Aorta (tissue), 5 donors: ENCODE measurements at regions of chr5 and their contacts with region 1.

Region 1: DNA sequence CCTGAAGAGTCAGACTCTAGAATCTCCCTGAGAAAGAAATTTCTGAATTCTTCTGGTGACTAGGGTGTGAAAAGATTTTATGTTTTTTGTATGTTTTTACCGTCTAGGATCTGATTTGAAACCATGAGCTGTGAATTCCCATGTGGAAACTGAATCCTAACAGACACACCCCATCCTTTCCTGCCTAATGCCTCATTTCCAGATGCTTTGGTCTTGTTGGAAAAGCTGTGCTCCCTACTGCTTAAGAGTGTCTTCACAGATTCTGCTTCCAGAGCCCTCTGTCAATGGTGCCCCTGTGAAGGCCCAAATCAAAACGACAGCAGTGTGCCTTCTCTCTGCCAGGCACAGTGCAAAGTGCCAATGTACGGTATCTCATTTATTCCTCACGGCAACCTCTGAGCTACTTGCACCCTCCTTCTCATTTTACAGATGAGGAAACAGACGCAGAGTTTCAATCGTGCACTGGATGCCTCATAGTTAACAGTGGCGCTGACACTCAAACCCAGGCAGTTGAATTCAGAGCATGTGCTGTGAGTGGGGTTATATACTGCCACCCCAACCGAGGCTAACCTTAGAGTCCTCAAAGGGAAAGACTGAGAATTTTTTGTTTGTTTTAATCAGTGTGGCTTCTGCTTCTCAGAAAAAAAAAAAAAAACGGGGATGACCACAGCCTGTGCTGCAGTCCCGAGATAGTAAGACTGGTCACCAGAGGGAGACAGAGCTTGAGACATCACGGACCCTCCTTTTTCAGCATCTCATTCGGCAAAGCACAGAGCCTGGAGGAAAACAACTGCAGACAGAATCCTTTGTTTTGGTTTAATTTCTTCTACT is 188.4 kb downstream of the SNCAIP start:
- DNase-seq: no peak
- ATAC-seq: peak; percentile 87
- H3K4me3 ChIP-seq: peak overlapping the region; percentile 13 to 36
- H3K27ac ChIP-seq: peak overlapping the region; percentile 53 to 72
- H3K4me1 ChIP-seq: peaks cover 0 to 4% of the 10 kb centered on the region in 2 donors
- H3K27me3 ChIP-seq: no peaks in the 10 kb centered on the region

Region 2: GRCh38 chr5:122435761-122436160 is 64.7 kb before region 1 on chr5:
- intact Hi-C with region 1: loop called in 1 of 2 experiments (anchors 5 kb)
- DNase-seq: no peak
- ATAC-seq: no peak
- H3K4me3 ChIP-seq: no peak overlapping the region
- H3K27ac ChIP-seq: no peak overlapping the region
- H3K4me1 ChIP-seq: peaks cover 3 to 12% of the 10 kb centered on the region in 2 donors
- H3K27me3 ChIP-seq: no peaks in the 10 kb centered on the region

Region 3: GRCh38 chr5:122545986-122546385 is 45.5 kb after region 1 on chr5:
- intact Hi-C with region 1: no loop called
- DNase-seq: no peak
- ATAC-seq: no peak
- H3K4me3 ChIP-seq: no peak overlapping the region
- H3K27ac ChIP-seq: no peak overlapping the region
- H3K4me1 ChIP-seq: no peaks in the 10 kb centered on the region
- H3K27me3 ChIP-seq: no peaks in the 10 kb centered on the region

Region 4: DNA sequence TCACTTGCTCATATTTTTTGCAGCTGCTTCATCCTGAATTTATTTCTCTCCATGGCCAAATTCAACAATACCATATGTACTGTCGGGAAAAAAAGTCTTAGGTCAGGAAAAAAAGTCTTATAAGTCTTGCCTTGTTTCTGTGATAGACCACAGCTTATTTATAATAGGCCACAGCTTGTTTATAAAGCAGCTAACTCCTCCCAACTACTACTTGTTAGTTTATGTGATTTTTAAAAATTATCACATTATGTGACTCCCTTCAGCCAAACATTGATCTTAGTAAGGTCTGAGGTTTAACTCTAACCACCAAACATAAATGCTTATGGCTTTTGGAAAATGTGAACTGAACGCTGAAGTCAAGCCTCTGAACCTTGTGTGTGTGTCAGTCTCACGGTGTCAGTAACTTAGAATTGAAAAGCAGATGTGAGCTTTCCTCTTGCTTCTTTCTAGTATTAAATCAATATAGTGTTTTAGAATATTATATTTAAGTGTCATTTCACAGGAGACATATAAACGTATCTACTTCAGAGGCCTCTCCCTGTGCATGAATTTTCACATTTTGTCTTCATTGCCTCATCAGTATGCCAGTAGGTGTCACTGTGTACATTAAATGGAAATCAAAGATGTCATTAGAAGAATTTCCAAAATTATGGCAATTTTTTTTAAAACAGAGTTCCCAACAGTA is 396.3 kb after region 1 on chr5:
- intact Hi-C with region 1: loop called in 1 of 2 experiments (anchors 10 kb)
- DNase-seq: no peak
- ATAC-seq: no peak
- H3K4me3 ChIP-seq: no peak overlapping the region
- H3K27ac ChIP-seq: no peak overlapping the region
- H3K4me1 ChIP-seq: no peaks in the 10 kb centered on the region
- H3K27me3 ChIP-seq: no peaks in the 10 kb centered on the region

Region 5: DNA sequence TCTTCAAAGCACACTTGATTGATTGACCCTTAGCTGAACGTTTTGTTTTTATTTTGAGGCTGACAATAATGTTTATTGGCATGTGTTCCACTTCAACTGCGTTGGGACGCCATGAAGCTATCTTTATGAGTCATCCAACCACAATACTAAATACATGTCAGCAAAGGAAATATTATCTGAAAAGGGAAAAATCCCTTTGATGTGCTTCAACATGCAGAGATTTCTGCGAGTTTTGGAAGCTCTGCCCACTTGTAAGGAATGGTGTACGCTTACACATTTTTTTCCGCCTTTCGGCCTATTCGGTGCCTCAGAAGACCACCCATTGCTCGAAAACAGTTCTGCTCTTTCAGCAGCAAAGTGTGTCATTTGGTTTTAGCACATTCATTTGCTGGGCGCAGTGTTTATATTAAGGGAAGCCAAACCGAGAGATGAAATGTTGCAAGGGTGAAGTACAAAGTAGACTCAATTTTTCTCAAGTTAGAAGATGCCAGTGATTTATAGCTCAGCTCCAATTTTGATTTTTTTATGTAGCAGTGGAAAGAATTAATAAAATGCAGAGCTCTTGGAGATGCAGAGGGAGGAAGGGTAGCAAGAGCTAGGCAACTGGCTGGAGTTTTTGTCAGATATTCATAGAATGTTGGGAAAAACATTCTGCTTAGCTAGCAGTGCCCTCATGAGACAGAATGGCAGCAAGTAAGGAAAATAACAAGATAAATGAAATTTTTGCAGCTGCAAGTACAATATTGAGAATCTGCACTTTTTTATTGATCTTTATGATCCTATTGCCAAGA is 657.5 kb after region 1 on chr5:
- intact Hi-C with region 1: loop called in 1 of 2 experiments (anchors 10 kb)
- DNase-seq: no peak
- ATAC-seq: peak; percentile 68
- H3K4me3 ChIP-seq: no peak overlapping the region
- H3K27ac ChIP-seq: peak overlapping the region; percentile 57 to 86
- H3K4me1 ChIP-seq: peaks cover 4 to 32% of the 10 kb centered on the region in 2 donors
- H3K27me3 ChIP-seq: no peaks in the 10 kb centered on the region